ENCODE measurements at regions of chr2 and their contacts with region 1.

Region 1: GRCh38 chr2:28958689-28959088 is 22.4 kb upstream of the TOGARAM2 start:
- DNase-seq: peak; percentile 81
- H3K4me3 ChIP-seq: peak overlapping the region in 1 of 4 donors; percentile 9
- H3K27ac ChIP-seq: no peak overlapping the region
- H3K4me1 ChIP-seq: peaks cover 0 to 12% (median 6%) of the 10 kb centered on the region in 4 donors
- H3K27me3 ChIP-seq: no peaks in the 10 kb centered on the region
- CTCF ChIP-seq: peak; percentile 41 to 78 (median 61)
- EP300 ChIP-seq: peak in 1 of 4 donors; percentile 4
- POLR2A ChIP-seq: no peak

Region 2: GRCh38 chr2:28810384-28811285 is 148.1 kb before region 1 on chr2 and contains the start of gene SPDYA:
- intact Hi-C with region 1: no loop called
- DNase-seq: peak; percentile 86
- H3K4me3 ChIP-seq: peak within 1 kb of the TSS; percentile 27 to 56 (median 49)
- H3K27ac ChIP-seq: peak within 1 kb of the TSS; percentile 32 to 54 (median 52)
- H3K4me1 ChIP-seq: peaks cover 0 to 22% (median 14%) of the 10 kb centered on the region in 4 donors
- H3K27me3 ChIP-seq: no peaks in the 10 kb centered on the region
- CTCF ChIP-seq: no peak
- EP300 ChIP-seq: no peak
- POLR2A ChIP-seq: no peak
- total RNA-seq, gene SPDYA: 0.66 to 2.2 (median 1.0) TPM

Region 3: DNA sequence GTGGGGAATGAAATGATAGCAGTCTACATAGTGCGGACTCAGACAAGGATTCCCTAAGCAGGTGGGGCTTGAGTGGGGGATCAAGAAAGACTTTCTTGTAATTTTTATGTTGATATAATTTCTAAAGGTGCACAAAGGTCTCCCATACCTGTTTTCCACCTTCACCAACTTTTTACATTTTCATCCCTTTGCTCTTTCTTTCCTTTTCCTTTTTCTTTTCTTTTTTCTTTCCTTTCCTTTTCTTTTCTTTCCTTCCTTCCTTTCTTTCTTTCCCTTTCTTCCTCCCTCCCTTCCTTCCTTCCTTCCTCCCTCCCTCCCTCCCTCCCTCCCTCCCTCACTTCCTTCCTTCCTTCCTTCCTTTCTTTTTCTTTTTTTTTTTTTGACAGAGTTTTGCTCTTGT is 78.5 kb before region 1 on chr2:
- intact Hi-C with region 1: no loop called
- DNase-seq: no peak
- H3K4me3 ChIP-seq: no peak overlapping the region
- H3K27ac ChIP-seq: no peak overlapping the region
- H3K4me1 ChIP-seq: no peaks in the 10 kb centered on the region
- H3K27me3 ChIP-seq: peaks cover 0 to 7% (median 0%) of the 10 kb centered on the region in 3 donors
- CTCF ChIP-seq: no peak
- EP300 ChIP-seq: no peak
- POLR2A ChIP-seq: no peak

Region 4: DNA sequence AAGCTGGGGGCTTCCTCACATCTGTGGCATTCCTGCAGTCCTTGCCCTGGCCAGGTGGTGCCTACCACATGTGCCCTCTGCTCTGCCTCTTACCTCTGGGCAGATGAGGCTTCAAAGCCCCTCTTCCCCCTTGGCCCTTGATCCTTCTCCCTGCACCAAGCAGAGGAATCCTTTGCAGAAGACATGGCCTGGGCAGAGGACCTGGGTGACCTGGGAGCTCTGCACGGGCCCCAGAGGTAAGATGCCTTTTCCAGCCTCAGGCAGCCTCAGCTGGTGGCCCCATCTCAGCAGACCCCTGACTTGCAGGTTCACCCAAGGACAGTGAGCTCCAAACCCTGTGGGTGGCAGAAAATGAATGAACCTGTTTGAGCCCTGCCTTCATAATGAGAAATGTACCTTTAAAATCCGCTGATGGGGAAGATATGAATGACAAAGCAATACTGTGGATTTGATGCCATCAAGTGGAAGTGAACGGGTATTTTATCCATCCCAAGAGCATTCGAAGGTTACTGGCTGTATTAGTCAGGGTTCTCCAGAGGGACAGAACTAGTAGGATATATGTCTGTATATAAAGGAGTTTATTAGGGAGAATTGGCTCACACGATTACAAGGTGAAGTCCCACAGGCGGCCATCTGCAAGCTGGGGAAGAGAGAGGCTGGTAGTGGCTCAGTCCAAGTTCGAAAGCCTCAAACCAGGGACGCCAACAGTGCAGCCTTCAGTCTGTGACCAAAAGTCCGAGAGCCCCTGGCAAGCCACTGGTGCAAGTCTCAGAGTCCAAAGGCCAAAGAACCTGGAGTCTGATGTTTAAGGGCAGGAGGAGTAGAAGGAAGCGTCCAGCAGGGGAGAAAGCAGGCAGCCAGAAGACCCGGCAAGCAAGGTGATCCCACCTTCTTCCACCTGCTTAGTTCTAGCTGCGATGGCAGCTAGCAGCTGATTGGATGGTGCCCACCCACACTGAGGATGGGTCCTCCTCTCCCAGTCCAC is 54.4 kb after region 1 on chr2:
- intact Hi-C with region 1: loop called (anchors 1 kb)
- DNase-seq: no peak
- H3K4me3 ChIP-seq: no peak overlapping the region
- H3K27ac ChIP-seq: no peak overlapping the region
- H3K4me1 ChIP-seq: peaks cover 0 to 31% (median 22%) of the 10 kb centered on the region in 4 donors
- H3K27me3 ChIP-seq: no peaks in the 10 kb centered on the region
- CTCF ChIP-seq: no peak
- EP300 ChIP-seq: no peak
- POLR2A ChIP-seq: no peak

Region 5: DNA sequence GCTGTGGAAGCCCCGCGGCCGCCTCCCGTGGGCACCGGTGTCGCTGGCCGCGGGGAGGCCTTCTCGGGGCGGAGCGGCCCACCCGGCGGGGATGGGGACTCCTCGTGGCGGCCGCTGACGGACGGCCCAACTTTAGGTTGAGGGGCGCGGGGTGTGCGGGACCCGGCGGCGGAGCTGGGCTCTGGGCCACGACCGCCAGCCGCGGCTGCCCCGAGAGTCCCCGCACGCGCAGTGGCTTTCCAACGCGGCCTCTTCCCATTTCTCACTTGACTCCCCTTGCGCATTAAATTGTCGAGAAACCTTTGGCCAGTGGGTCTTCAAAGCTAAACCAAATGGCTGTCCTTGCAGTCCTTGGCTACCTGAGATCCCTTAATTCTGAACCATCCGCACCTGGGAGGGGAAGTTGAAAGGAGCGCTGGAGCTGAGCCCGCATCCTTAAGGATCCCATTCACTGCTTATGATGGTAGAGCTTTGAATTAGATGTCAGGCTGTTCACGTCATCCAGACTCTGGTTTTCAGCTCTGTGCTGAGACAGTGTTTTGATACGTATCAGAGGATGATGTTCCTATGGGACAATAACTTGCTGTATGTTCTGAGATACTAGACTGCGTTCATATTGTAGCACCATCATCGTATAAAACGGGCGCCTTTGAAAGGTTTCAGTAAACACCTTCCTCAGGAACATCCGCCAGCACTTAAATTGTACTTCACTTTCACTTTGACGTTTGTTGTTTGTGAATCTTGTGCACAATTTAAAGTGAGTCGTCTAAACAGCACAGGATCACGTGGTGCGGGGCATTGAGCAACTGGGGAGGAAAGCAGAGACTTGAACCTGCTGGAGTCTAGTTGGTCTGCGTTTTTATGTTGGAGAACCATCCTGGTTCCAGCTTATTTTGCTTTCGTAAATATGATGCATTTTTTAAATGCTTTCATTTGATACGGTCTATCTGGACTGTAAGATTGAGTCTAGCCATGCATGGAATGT is 157.4 kb after region 1 on chr2:
- intact Hi-C with region 1: loop called (anchors 10 kb)
- DNase-seq: peak; percentile 89
- H3K4me3 ChIP-seq: peak overlapping the region; percentile 62 to 84 (median 78)
- H3K27ac ChIP-seq: peak overlapping the region; percentile 84 to 94 (median 91)
- H3K4me1 ChIP-seq: peaks cover 0 to 36% (median 27%) of the 10 kb centered on the region in 4 donors
- H3K27me3 ChIP-seq: no peaks in the 10 kb centered on the region
- CTCF ChIP-seq: no peak
- EP300 ChIP-seq: no peak
- POLR2A ChIP-seq: no peak

Region 6: DNA sequence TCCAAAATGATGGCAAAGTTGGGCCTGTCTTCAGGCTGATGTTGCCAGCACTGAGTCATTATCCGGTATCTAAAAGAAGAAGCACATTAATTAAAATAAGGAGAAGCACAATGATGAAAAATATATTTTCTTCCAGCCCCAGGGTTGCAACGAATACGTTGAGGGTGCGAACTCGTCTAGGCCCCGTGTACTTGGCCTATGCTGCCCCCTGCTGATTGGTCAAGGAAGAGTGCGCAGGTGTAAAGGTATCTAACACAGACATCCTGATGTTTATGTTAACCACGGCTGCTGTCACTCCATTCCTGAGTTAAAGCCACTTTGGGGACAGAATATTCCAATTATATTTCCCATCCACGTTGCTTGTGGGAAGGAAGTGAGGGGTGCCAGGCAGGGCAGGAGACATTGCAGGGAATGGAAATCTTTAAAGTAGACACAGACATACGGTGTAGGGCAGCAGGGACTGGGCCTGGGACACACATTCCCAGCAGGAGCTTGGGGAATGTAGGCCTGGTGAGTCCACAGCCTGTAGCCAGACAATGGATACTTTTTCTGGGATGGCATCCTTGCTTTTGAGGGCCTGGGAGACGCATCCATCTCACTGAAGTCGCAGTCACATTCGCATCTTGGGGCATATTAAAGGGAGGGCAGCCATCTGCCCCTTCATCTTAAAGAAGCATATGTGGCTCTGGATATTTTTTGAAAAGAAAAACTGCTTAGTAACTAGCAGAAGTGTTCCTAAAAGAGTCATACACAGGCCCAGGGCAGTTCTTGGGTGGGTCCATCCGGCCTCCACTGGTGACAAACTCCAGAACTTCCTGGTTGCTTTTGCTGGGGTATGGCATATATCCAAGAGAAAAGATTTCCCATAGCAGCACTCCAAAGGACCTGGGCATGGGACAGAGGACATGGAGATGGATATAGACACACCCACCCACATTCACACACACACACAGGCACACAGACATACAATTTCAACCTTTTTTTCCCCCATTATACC is 238.4 kb after region 1 on chr2:
- intact Hi-C with region 1: loop called (anchors 2 kb)
- DNase-seq: no peak
- H3K4me3 ChIP-seq: no peak overlapping the region
- H3K27ac ChIP-seq: no peak overlapping the region
- H3K4me1 ChIP-seq: peaks cover 0 to 8% (median 0%) of the 10 kb centered on the region in 4 donors
- H3K27me3 ChIP-seq: no peaks in the 10 kb centered on the region
- CTCF ChIP-seq: peak; percentile 42 to 79 (median 74)
- EP300 ChIP-seq: no peak
- POLR2A ChIP-seq: no peak

Region 7: GRCh38 chr2:30089171-30089570 is 1130.5 kb after region 1 on chr2:
- intact Hi-C with region 1: loop called (anchors 10 kb)
- DNase-seq: no peak
- H3K4me3 ChIP-seq: no peak overlapping the region
- H3K27ac ChIP-seq: no peak overlapping the region
- H3K4me1 ChIP-seq: no peaks in the 10 kb centered on the region
- H3K27me3 ChIP-seq: peaks cover 0 to 17% (median 0%) of the 10 kb centered on the region in 3 donors
- CTCF ChIP-seq: no peak
- EP300 ChIP-seq: no peak
- POLR2A ChIP-seq: no peak

Measured in sigmoid colon (tissue), 7 donors.